Activated naive CD4-positive, alpha-beta T cell treated with anti-CD3 and anti-CD28 coated beads for 36 hours (primary cell): ENCODE measurements at regions of chr6 and their contacts with region 1.

Region 1: DNA sequence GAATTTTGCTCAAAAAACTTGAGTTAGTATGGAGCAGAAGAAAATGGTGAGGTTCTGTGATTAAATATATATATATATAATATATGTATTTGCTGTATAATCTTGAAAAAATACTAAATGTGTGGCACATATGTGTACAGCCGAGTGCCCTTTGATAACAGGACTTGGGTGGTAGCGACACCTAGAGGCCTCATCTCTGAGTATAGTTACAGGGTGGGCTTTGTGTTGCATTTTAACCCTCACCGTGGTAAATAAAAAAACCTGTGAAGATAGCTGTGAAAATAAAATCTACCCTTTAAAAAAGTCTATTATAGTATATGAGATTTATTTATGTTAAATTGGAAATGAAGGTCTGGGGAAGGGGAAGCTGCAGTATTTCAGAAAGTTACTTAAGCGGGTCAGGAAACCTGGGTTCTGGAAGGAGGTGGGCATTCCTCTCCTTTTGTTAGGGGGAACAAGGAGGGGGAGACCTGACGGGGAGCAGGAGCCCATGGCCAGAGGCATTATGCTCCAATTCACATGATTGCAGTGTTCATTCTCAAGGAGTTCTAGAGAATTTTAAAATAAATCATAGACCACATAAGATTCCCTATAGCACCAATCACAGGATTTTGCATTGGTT is 82.7 kb downstream of the SH3BGRL2 start:
- DNase-seq: peak; percentile 67
- H3K4me3 Mint-ChIP-seq: no peak overlapping the region
- H3K27ac Mint-ChIP-seq: no peak overlapping the region
- H3K4me1 Mint-ChIP-seq: no peaks in the 10 kb centered on the region
- H3K27me3 Mint-ChIP-seq: peaks cover 7% of the 10 kb centered on the region

Region 2: GRCh38 chr6:77740380-77740779 is 1973.4 kb before region 1 on chr6:
- CTCF ChIA-PET with region 1: no interaction called
- intact Hi-C with region 1: loop called (anchors 10 kb)
- DNase-seq: no peak
- H3K4me3 Mint-ChIP-seq: no peak overlapping the region
- H3K27ac Mint-ChIP-seq: no peak overlapping the region
- H3K4me1 Mint-ChIP-seq: no peaks in the 10 kb centered on the region
- H3K27me3 Mint-ChIP-seq: no peaks in the 10 kb centered on the region

Region 3: GRCh38 chr6:79466207-79466834 is 247.5 kb before region 1 on chr6:
- CTCF ChIA-PET with region 1: no interaction called
- intact Hi-C with region 1: loop called (anchors 5 kb)
- DNase-seq: no peak
- H3K4me3 Mint-ChIP-seq: no peak overlapping the region
- H3K27ac Mint-ChIP-seq: no peak overlapping the region
- H3K4me1 Mint-ChIP-seq: no peaks in the 10 kb centered on the region
- H3K27me3 Mint-ChIP-seq: peaks cover 19% of the 10 kb centered on the region

Region 4: DNA sequence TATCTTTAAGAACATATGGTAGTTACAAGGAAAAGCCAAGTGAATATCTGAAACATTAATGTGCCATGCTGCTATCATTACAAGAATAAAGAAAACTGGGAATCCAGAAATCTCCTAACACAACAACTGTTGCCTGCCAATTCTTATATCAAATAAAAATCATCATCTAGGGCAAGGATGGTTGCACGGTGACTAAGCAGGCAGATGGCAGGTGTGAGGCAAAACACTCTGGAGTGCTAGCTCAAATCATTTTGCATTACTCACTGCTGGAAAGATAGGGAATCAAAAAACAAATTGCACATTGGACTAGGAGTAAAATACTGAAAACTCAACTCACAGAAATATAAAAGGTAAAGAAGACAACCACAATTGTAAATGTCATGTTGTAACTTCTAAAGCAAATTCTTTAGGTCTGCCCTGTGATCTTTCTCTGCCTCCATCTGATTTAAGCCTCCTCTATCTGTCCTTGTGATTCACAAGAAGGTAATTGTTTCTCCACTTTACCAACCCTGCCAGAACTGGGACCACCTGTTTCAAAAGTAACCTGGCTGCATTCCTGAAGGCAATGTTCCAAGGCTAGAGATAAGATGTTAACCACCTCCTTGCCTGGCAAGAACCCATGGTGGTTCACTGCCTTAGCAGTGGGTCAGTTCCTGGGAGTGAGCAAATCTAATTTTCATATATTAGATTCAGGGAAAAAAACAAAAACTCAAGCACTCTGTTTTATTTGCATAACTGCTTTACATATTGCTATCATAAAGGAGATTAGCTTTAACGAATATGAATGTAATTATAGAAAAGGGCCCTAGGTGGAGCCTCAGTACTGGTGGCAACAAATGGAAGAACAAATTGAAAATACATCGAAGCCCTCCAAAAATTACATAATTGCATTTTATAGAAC is 143.4 kb before region 1 on chr6:
- CTCF ChIA-PET with region 1: interaction called, 8 read pairs
- intact Hi-C with region 1: loop called (anchors 1 kb)
- DNase-seq: no peak
- H3K4me3 Mint-ChIP-seq: no peak overlapping the region
- H3K27ac Mint-ChIP-seq: no peak overlapping the region
- H3K4me1 Mint-ChIP-seq: no peaks in the 10 kb centered on the region
- H3K27me3 Mint-ChIP-seq: no peaks in the 10 kb centered on the region

Region 5: GRCh38 chr6:79646006-79646405 is 67.8 kb before region 1 on chr6:
- CTCF ChIA-PET with region 1: interaction called, 4 read pairs
- intact Hi-C with region 1: loop called (anchors 2 kb)
- DNase-seq: peak; percentile 23
- H3K4me3 Mint-ChIP-seq: no peak overlapping the region
- H3K27ac Mint-ChIP-seq: no peak overlapping the region
- H3K4me1 Mint-ChIP-seq: peaks cover 8% of the 10 kb centered on the region
- H3K27me3 Mint-ChIP-seq: peaks cover 13% of the 10 kb centered on the region

Region 6: DNA sequence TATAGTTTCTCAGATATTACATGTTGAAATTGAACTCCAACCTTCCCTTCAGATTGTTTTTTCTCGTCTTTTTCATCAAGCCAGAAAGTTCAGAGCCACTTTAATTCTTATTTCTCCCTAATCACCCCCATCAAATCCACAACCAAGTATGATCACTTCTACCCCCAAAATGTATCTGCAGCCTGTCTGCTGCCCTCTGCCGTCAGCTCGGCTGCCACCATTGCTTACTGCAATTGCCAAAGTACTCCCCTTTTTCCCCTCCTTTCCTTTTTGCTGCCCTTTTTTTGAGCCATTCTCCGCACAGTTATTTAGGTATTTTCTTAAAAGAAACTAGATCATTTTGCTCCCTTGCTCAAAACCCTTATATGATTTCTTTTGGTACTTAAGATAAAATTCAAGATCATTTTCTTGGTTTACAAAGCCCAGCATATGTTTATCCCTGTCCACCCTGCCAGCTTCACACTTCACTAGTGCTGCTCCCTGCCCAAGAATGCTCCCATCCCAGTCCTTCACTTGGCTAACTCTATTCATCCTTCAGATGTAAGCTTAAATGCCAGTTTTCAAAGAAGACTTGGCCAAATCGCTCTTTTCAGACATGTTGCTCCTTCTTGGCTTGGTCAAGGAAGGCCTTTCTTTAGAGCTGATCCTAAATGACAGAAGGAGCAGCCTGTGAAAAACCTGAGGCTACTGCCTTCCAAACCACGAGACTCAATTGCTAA is 19.0 kb before region 1 on chr6:
- CTCF ChIA-PET with region 1: no interaction called
- intact Hi-C with region 1: no loop called
- DNase-seq: no peak
- H3K4me3 Mint-ChIP-seq: no peak overlapping the region
- H3K27ac Mint-ChIP-seq: no peak overlapping the region
- H3K4me1 Mint-ChIP-seq: no peaks in the 10 kb centered on the region
- H3K27me3 Mint-ChIP-seq: no peaks in the 10 kb centered on the region